A673 (cell line): ENCODE measurements at regions of chr14 and their contacts with region 1.

Region 1: GRCh38 chr14:68312884-68313610 is 479.8 kb downstream of the ZFP36L1 start:
- DNase-seq: no peak
- H3K4me3 ChIP-seq: no peak overlapping the region
- H3K27ac ChIP-seq: no peak overlapping the region
- H3K4me1 ChIP-seq: peaks cover under 1% of the 10 kb centered on the region
- H3K27me3 ChIP-seq: no peaks in the 10 kb centered on the region
- CTCF ChIP-seq: no peak

Region 2: GRCh38 chr14:67933266-67933665 is 379.8 kb before region 1 on chr14:
- CTCF ChIA-PET with region 1: no interaction called
- POLR2A ChIA-PET with region 1: no interaction called
- intact Hi-C with region 1: no loop called
- DNase-seq: no peak
- H3K4me3 ChIP-seq: no peak overlapping the region
- H3K27ac ChIP-seq: no peak overlapping the region
- H3K4me1 ChIP-seq: peaks cover 21% of the 10 kb centered on the region
- H3K27me3 ChIP-seq: peaks cover 12% of the 10 kb centered on the region
- CTCF ChIP-seq: no peak

Region 3: DNA sequence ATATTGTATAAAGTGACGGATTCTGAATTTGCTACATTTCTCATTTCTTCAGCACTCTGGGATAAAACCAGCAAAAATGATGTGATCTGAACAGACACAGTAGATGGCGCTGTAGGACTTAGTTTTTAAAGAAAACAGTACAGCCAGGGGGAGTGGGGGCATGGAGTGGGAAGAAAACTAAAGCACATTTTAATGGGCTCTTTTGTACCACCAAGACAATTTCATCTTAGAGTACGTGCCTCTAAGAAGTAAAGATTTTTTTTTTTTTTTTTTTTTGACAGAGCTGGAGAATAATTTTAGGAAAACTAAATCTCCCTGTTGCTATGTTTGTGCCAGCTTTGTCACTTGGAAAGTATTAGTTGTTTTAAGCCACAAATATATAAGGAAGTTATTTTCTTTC is 369.1 kb before region 1 on chr14:
- CTCF ChIA-PET with region 1: no interaction called
- POLR2A ChIA-PET with region 1: no interaction called
- intact Hi-C with region 1: no loop called
- DNase-seq: peak; percentile 86
- H3K4me3 ChIP-seq: no peak overlapping the region
- H3K27ac ChIP-seq: no peak overlapping the region
- H3K4me1 ChIP-seq: no peaks in the 10 kb centered on the region
- H3K27me3 ChIP-seq: no peaks in the 10 kb centered on the region
- CTCF ChIP-seq: peak; percentile 85

Region 4: DNA sequence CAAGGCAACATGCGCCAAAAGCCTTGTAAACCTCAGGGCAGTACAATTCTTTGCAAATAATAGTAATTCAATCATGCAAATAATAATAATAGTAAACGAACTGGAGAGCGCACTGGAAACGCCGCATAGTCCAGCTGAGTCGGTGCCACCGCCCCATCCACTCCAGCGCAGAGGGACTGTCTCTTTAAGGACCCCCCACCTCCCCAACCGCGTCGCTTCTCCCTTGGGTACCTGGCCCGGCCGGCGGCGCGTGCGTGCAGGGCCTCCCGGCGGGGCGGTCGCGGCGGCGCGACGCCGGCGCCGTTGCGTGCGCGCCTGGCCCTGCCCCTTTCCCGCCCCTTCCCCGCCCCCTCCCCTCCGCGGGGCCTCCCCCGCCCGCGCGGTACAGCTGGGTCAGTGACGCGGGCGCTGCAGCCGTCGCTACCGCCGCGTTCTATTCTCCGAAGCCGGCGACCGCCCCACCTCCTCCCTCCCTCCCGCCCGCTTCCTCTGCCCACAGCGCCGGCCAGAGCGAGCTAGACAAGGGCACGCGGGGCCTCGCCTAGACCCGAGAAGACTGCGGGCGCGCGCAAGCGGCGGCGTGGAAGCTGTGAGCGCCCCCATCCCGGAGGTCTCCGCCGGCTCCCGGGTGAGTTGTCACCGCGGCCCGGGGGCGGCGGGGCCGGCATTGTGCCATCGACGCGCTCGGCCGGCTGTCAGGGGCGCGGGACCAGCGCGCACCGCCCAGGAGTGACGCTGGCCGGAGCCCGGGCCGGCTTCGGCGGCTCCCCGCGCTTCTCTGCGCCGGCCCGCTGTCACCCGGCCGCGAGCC is 1298.4 kb after region 1 on chr14 and contains the start of gene SUSD6:
- CTCF ChIA-PET with region 1: no interaction called
- POLR2A ChIA-PET with region 1: interaction called, 11 read pairs
- intact Hi-C with region 1: no loop called
- DNase-seq: peak; percentile 94
- H3K4me3 ChIP-seq: peak within 1 kb of the TSS; percentile 60
- H3K27ac ChIP-seq: peak within 1 kb of the TSS; percentile 70
- H3K4me1 ChIP-seq: peaks cover 23% of the 10 kb centered on the region
- H3K27me3 ChIP-seq: no peaks in the 10 kb centered on the region
- CTCF ChIP-seq: no peak
- total RNA-seq, gene SUSD6: 9.2 and 13.1 TPM in 2 replicates